ENCODE measurements at regions of chr15 and their contacts with region 1.

Region 1: DNA sequence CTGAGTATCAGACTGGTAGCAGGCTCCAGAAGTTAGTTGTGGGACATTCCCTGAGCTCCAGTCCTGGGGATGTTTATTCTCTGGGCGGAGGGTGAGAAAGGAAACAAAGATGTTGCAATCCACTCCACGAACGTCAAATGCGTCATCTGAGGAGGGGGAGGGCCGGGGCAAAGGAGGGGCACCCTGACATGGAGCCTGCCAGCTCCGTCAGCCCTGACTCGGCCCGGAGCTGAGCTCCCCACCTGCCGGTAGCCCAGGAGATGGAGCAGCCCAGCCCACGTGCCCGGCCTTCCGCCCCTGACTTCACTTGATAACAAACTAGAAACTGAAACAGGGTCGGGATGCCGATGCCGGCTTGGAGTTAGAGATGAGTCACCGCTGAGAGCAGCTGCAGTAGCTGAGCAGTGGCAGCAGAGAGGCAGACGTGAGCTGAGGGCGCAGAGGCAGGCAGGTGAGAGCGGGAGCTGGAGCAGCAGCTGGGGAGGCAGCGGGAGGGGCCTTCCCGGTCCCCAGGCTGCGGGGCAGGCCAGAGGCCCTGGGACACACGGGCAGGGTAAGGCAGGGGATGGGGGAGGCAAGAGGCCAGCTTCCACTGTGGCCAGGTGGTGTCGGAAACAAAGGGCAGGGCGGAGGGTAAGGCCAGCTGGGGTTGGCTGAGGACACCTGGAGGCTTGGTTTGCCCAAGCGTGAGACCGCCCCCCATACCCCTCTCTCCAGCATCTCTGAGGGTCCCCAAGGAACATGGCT is at the start of gene ISG20:
- DNase-seq: peak; percentile 99
- ATAC-seq: peak; percentile 82
- H3K4me3 Mint-ChIP-seq: peak within 1 kb of the TSS; percentile 82
- H3K27ac Mint-ChIP-seq: peak within 1 kb of the TSS; percentile 96
- H3K4me1 Mint-ChIP-seq: peaks cover 81% of the 10 kb centered on the region
- H3K27me3 Mint-ChIP-seq: no peaks in the 10 kb centered on the region
- CTCF ChIP-seq: peak; percentile 47
- total RNA-seq, gene ISG20: 75.1 to 82.8 TPM

Region 2: DNA sequence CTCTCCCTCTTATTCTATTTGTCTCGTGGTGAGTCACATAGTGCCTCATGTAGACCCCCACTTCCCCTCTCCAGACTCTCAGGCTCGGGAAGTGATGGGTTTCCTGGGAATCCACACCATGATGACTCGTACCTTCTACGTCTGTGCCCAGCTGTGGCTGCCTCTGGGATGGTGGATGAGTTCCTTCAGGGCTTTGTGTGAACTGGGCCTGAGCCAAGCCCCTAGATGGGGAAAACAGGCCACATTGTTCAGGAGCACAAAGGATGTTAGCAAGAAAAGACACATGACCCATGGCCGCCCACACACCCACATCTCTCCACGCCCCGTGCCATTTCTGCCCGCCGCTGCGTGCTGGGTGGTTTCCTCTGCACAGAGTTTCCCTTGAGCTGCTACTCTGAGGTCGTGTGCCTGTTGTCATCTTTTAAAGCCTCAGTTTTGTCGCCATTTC is 10.5 kb after region 1 on chr15:
- CTCF ChIA-PET with region 1: interaction called, 12 read pairs
- POLR2A ChIA-PET with region 1: interaction called, 23 read pairs
- intact Hi-C with region 1: no loop called
- DNase-seq: peak; percentile 95
- ATAC-seq: peak; percentile 86
- H3K4me3 Mint-ChIP-seq: peak overlapping the region; percentile 73
- H3K27ac Mint-ChIP-seq: peak overlapping the region; percentile 98
- H3K4me1 Mint-ChIP-seq: peaks cover 74% of the 10 kb centered on the region
- H3K27me3 Mint-ChIP-seq: no peaks in the 10 kb centered on the region
- CTCF ChIP-seq: no peak